K562 (cell line): ENCODE measurements at regions of chr17 and their contacts with region 1.

Region 1: GRCh38 chr17:43830510-43831140 is 2.3 kb downstream of the MPP3 start:
- DNase-seq: no peak
- ATAC-seq: no peak
- H3K4me3 ChIP-seq: no peak overlapping the region
- H3K27ac ChIP-seq: no peak overlapping the region
- H3K4me1 ChIP-seq: peaks cover 5 to 22% of the 10 kb centered on the region in 2 experiments
- H3K27me3 ChIP-seq: peaks cover 0 to 10% of the 10 kb centered on the region in 2 experiments; a peak in 1 of 5 replicates
- CTCF ChIP-seq: no peak
- EP300 ChIP-seq: no peak
- POLR2A ChIP-seq: no peak
- RAD21 ChIP-seq: no peak

Region 2: DNA sequence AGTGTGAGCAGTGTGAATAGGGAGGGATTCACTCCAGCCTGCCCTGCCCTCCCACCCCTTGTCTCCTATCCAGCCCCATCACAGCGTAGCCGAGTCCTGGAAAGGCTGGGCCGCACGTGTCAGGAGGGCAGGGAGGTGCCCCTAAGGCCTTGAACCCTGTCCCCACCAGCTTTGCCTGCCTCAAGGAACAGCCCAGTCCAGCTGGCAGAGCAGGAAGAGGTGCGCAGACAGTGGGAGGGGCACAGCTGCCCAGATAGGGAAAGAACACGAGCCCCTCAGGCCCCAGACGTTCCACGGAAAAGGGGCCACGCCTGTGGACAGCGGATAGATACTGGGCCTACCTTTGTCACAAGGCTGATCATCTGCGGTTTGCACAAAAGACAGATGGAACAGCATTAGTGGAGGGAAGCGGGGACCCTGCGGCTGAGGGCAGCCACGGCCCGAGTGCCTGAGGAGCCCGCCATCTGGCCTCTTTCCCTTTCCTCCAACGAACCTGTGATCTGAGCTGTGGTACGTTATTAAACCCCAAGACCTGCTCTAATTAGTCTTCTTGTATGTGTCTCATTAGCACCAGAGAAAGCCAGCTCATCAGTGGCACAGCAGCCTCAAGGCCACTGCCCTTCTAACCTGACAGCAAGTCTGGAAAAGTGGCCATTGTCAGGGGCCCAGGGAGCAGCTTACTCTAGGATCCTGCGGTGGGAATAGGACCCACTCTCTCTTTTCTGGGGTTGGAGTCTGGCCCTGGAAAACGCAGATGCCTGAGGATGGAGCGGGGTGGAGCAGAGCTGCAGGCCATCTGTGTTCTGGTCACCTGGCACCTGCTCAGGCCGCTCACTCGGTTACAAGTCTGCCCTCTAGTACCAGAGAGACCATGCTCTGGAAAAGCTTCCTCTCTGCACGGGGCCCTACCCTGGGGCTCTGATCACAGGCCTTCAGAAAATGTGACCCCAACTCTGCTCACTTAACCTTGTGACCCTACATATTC is 14.0 kb before region 1 on chr17:
- CTCF ChIA-PET with region 1: no interaction called
- POLR2A ChIA-PET with region 1: interaction called, 32 read pairs
- in situ Hi-C with region 1: no loop called
- intact Hi-C with region 1: no loop called
- DNase-seq: no peak
- ATAC-seq: no peak
- H3K4me3 ChIP-seq: no peak overlapping the region
- H3K27ac ChIP-seq: no peak overlapping the region
- H3K4me1 ChIP-seq: peaks cover 0 to 3% of the 10 kb centered on the region in 2 experiments; a peak in 1 of 5 replicates
- H3K27me3 ChIP-seq: 0 out of 5 replicates have a peak, but pooled peaks cover 0 to 9% of the 10 kb centered on the region in 2 experiments
- CTCF ChIP-seq: no peak
- EP300 ChIP-seq: no peak
- POLR2A ChIP-seq: no peak
- RAD21 ChIP-seq: no peak

Region 3: DNA sequence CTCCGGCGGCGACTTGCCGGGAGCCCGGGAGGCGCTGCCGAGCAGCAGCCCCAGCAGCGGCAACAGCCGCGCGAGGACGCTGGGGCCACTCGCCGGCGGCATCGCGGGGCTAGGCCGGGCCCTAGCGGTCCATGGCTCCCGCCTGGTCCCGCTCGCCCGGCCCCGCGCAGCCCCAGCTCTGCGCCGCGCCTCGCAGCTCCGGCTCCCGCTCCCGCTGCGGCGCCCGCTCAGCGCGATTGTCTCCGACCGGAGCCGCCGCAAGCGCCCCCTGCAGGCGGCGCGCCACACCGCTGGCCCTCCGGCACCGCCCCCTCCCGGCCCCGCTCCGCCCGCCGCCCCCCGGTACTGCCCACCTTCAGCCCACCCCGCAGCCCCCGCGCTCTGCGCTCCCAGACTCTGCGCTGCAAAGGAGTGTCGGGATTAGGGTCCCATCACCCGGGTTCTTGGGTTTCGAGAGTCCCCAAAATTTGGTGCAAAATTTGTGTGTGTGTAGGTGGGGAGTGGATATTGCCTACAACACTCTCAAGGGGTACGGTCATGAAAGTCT is 533.1 kb after region 1 on chr17 and contains the start of gene FAM171A2:
- CTCF ChIA-PET with region 1: no interaction called
- POLR2A ChIA-PET with region 1: no interaction called
- in situ Hi-C with region 1: no loop called
- intact Hi-C with region 1: no loop called
- DNase-seq: peak; percentile 78 to 89 (median 88)
- ATAC-seq: peak; percentile 93
- H3K4me3 ChIP-seq: peak within 1 kb of the TSS; percentile 81
- H3K27ac ChIP-seq: peak within 1 kb of the TSS; percentile 60; the same call in 1 of the 3 replicates
- H3K4me1 ChIP-seq: peaks cover 5 to 31% of the 10 kb centered on the region in 2 experiments; a peak in 4 of 5 replicates
- H3K27me3 ChIP-seq: no peaks in the 10 kb centered on the region; a peak in 1 of 5 replicates
- CTCF ChIP-seq: peak; percentile 8 to 89 (median 63); a peak in 4 of 6 replicates
- EP300 ChIP-seq: no peak
- POLR2A ChIP-seq: no peak
- RAD21 ChIP-seq: peak in 1 of 2 experiments; percentile 36; a peak in 2 of 4 replicates
- polyA plus RNA-seq, gene FAM171A2: 0.10 TPM in 1 of 2 experiments, not detected in the other